Naive thymus-derived CD4-positive, alpha-beta T cell (primary cell): ENCODE measurements at regions of chr2 and their contacts with region 1.

Region 1: GRCh38 chr2:147843864-147844696 is 749 bp upstream of the ACVR2A start:
- DNase-seq: peak; percentile 77 to 90 (median 86)
- ATAC-seq: peak; percentile 89
- H3K4me3 ChIP-seq: peak overlapping the region; percentile 79
- H3K4me3 Mint-ChIP-seq: peak overlapping the region; percentile 88 to 99 (median 94)
- H3K27ac ChIP-seq: peak overlapping the region; percentile 66
- H3K27ac Mint-ChIP-seq: peak overlapping the region; percentile 83 to 97 (median 86)
- H3K4me1 ChIP-seq: peaks cover 15 to 31% of the 10 kb centered on the region in 2 donors
- H3K4me1 Mint-ChIP-seq: peaks cover 33 to 49% (median 36%) of the 10 kb centered on the region in 7 donors
- H3K27me3 ChIP-seq: no peaks in the 10 kb centered on the region
- H3K27me3 Mint-ChIP-seq: peaks cover 0 to 67% (median 5%) of the 10 kb centered on the region in 5 donors

Region 2: DNA sequence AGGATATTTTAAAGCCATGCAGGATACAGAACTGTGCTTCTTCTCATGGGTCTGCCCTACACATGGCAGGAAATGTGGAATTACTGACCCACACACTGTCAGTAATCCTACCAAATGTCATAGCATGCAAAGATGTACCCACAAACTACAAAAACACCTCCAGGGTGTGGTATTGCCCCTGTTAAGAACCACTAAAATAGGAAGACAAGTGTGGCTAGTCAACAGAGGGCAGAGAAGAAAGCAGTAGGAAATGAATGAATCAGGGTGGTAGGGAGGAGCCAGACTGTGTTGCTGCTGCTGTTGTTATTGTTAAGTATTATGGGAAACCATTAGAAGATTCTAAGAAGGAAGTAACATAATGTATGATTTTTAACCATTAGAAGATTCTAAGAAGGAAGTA is 555.9 kb before region 1 on chr2:
- CTCF ChIA-PET with region 1: no interaction called
- POLR2A ChIA-PET with region 1: no interaction called
- intact Hi-C with region 1: loop called in 1 of 2 experiments (anchors 5 kb)
- DNase-seq: peak in 5 of 9 donors; percentile 2 to 48 (median 19)
- ATAC-seq: peak; percentile 87
- H3K4me3 ChIP-seq: no peak overlapping the region
- H3K4me3 Mint-ChIP-seq: peak overlapping the region in 1 of 10 donors; percentile 45
- H3K27ac ChIP-seq: no peak overlapping the region
- H3K27ac Mint-ChIP-seq: peak overlapping the region in 4 of 9 donors; percentile 25 to 84 (median 63)
- H3K4me1 ChIP-seq: peaks cover 0 to 10% of the 10 kb centered on the region in 2 donors
- H3K4me1 Mint-ChIP-seq: peaks cover 8 to 43% (median 9%) of the 10 kb centered on the region in 7 donors
- H3K27me3 ChIP-seq: no peaks in the 10 kb centered on the region
- H3K27me3 Mint-ChIP-seq: peaks cover 0 to 5% (median 0%) of the 10 kb centered on the region in 5 donors

Region 3: GRCh38 chr2:147623328-147623727 is 220.8 kb before region 1 on chr2:
- CTCF ChIA-PET with region 1: no interaction called
- POLR2A ChIA-PET with region 1: no interaction called
- intact Hi-C with region 1: loop called in 1 of 2 experiments (anchors 2 kb)
- DNase-seq: peak in 7 of 9 donors; percentile 12 to 64 (median 41)
- ATAC-seq: peak; percentile 88
- H3K4me3 ChIP-seq: no peak overlapping the region
- H3K4me3 Mint-ChIP-seq: peak overlapping the region; percentile 1 to 63 (median 37)
- H3K27ac ChIP-seq: no peak overlapping the region
- H3K27ac Mint-ChIP-seq: peak overlapping the region; percentile 4 to 76 (median 36)
- H3K4me1 ChIP-seq: peaks cover 0 to 23% of the 10 kb centered on the region in 2 donors
- H3K4me1 Mint-ChIP-seq: peaks cover 12 to 36% (median 25%) of the 10 kb centered on the region in 7 donors
- H3K27me3 ChIP-seq: no peaks in the 10 kb centered on the region
- H3K27me3 Mint-ChIP-seq: no peaks in the 10 kb centered on the region

Region 4: GRCh38 chr2:147863835-147864234 is 19.8 kb after region 1 on chr2:
- CTCF ChIA-PET with region 1: interaction called, 4 read pairs
- POLR2A ChIA-PET with region 1: no interaction called
- intact Hi-C with region 1: loop called in 1 of 2 experiments (anchors 2 kb)
- DNase-seq: no peak
- ATAC-seq: no peak
- H3K4me3 ChIP-seq: no peak overlapping the region
- H3K4me3 Mint-ChIP-seq: no peak overlapping the region
- H3K27ac ChIP-seq: no peak overlapping the region
- H3K27ac Mint-ChIP-seq: no peak overlapping the region
- H3K4me1 ChIP-seq: peaks cover 9 to 23% of the 10 kb centered on the region in 2 donors
- H3K4me1 Mint-ChIP-seq: peaks cover 4 to 50% (median 36%) of the 10 kb centered on the region in 7 donors
- H3K27me3 ChIP-seq: no peaks in the 10 kb centered on the region
- H3K27me3 Mint-ChIP-seq: peaks cover 0 to 3% (median 0%) of the 10 kb centered on the region in 5 donors

Region 5: GRCh38 chr2:148020111-148021058 is 176.3 kb after region 1 on chr2 and contains the start of gene ORC4:
- CTCF ChIA-PET with region 1: no interaction called
- POLR2A ChIA-PET with region 1: no interaction called
- intact Hi-C with region 1: loop called (anchors 1 kb)
- DNase-seq: peak; percentile 70 to 98 (median 97)
- ATAC-seq: peak; percentile 94
- H3K4me3 ChIP-seq: peak within 1 kb of the TSS; percentile 89
- H3K4me3 Mint-ChIP-seq: peak within 1 kb of the TSS; percentile 92 to 100 (median 98)
- H3K27ac ChIP-seq: peak within 1 kb of the TSS; percentile 91
- H3K27ac Mint-ChIP-seq: peak within 1 kb of the TSS; percentile 89 to 99 (median 97)
- H3K4me1 ChIP-seq: peaks cover 20 to 36% of the 10 kb centered on the region in 2 donors
- H3K4me1 Mint-ChIP-seq: peaks cover 27 to 84% (median 70%) of the 10 kb centered on the region in 7 donors
- H3K27me3 ChIP-seq: no peaks in the 10 kb centered on the region
- H3K27me3 Mint-ChIP-seq: no peaks in the 10 kb centered on the region
- total RNA-seq, gene ORC4: 34.1 to 63.7 (median 44.8) TPM

Region 6: DNA sequence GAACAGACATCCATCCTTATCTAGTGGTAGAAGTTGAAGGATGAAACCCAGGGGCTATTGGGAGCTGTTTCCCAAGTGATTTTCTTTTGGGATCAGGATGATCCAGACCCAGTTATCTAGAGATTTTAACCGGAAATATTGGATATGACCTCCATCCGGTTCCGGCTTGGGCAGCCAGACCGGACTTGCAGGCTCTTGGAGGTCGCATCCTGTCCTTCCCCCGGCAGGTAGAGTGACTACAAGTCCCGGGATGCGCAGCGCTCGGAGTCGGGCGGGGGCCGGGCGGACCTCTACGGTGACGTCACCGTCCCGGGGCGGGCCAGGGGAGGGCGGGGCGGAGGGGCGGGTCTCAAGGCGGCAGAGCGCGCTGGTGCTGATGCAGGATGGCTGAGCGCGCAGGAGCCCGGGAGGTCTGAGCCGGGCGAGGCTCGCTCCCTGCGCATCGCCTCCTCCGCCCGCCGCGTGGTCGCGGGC is 1030.8 kb after region 1 on chr2 and contains the start of gene KIF5C:
- CTCF ChIA-PET with region 1: no interaction called
- POLR2A ChIA-PET with region 1: no interaction called
- intact Hi-C with region 1: loop called (anchors 5 to 10 kb)
- DNase-seq: peak; percentile 67 to 83 (median 76)
- ATAC-seq: peak; percentile 95
- H3K4me3 ChIP-seq: peak within 1 kb of the TSS; percentile 45
- H3K4me3 Mint-ChIP-seq: peak within 1 kb of the TSS; percentile 77 to 89 (median 86)
- H3K27ac ChIP-seq: no peak within 1 kb of the TSS
- H3K27ac Mint-ChIP-seq: peak within 1 kb of the TSS in 6 of 9 donors; percentile 4 to 82 (median 72)
- H3K4me1 ChIP-seq: peaks cover 5 to 6% of the 10 kb centered on the region in 2 donors
- H3K4me1 Mint-ChIP-seq: peaks cover 0 to 19% (median 14%) of the 10 kb centered on the region in 7 donors
- H3K27me3 ChIP-seq: no peaks in the 10 kb centered on the region
- H3K27me3 Mint-ChIP-seq: peaks cover 8 to 33% (median 28%) of the 10 kb centered on the region in 5 donors
- total RNA-seq, gene KIF5C: 3.6 to 14.3 (median 6.8) TPM